ENCODE measurements at regions of chr2 and their contacts with region 1.

Region 1: GRCh38 chr2:135004005-135004746 is 43.1 kb downstream of the MAP3K19 start:
- DNase-seq: peak; percentile 75
- ATAC-seq: peak; percentile 96
- H3K4me3 Mint-ChIP-seq: no peak overlapping the region
- H3K27ac Mint-ChIP-seq: no peak overlapping the region
- H3K4me1 Mint-ChIP-seq: peaks cover 4% of the 10 kb centered on the region
- H3K27me3 Mint-ChIP-seq: peaks cover 8% of the 10 kb centered on the region

Region 2: DNA sequence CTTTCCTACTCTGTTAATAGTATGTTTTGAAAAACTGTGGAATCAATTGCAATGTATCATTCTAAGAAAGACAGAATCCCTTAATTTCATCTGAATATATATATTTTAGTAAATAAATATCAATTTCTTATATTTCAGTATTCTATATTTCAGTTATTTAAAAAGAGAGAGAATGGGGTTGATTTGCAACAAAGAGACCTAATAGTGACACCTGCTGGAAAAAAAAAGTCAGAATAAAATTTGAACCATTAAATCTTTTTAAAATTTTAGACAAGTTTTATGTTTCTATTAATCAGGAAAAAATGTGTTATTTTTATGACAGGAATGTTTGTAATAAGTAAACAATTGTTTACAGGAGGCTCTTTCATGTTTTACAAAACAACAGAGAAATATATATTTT is 106.2 kb before region 1 on chr2:
- CTCF ChIA-PET with region 1: no interaction called
- POLR2A ChIA-PET with region 1: no interaction called
- DNase-seq: no peak
- ATAC-seq: no peak
- H3K4me3 Mint-ChIP-seq: no peak overlapping the region
- H3K27ac Mint-ChIP-seq: no peak overlapping the region
- H3K4me1 Mint-ChIP-seq: no peaks in the 10 kb centered on the region
- H3K27me3 Mint-ChIP-seq: peaks cover 6% of the 10 kb centered on the region

Region 3: GRCh38 chr2:134988994-134989605 is 15.1 kb before region 1 on chr2:
- CTCF ChIA-PET with region 1: interaction called, 20 read pairs
- POLR2A ChIA-PET with region 1: no interaction called
- DNase-seq: no peak
- ATAC-seq: no peak
- H3K4me3 Mint-ChIP-seq: no peak overlapping the region
- H3K27ac Mint-ChIP-seq: no peak overlapping the region
- H3K4me1 Mint-ChIP-seq: peaks cover under 1% of the 10 kb centered on the region
- H3K27me3 Mint-ChIP-seq: peaks cover 10% of the 10 kb centered on the region

Region 4: DNA sequence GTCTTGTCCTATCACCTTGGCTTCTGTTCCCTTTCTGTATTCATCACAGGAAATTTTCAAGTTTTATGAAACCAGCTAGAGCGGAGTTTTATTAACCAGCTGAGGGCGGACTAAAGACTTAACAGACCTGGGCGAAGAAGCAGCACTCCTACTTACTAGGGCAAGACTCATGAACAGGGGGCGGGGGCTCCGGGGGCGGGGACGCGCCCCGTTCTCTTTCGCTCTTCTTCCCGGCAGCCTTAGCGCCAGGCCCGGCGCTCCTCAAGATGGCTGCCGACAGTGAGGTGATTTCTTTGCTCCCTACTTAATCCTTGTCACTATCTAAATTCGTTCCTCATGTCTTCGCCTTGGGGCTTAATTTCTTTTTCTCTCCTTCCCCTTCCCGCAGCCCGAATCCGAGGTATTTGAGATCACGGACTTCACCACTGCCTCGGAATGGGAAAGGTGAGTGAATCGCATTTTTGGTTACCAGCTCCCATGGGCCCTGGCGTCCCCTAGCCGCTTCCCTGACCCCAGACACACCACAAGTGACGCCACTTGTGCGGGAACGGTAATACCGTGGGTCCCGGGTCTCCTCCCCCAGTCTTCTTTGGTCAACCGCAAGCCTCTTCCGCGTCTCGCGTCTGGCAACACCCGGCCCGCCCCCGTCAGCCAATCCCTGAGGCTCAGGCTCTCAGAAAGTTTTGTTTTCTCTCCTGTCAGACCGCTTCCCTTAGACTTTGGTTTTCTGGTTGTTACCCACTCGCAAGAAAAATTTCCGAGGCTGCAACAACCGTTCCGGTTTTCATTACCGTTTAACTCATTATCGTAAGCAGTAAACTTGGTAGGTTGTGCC is 48.1 kb after region 1 on chr2 and contains the start of gene RAB3GAP1:
- CTCF ChIA-PET with region 1: interaction called, 15 read pairs
- POLR2A ChIA-PET with region 1: no interaction called
- DNase-seq: peak; percentile 95
- ATAC-seq: peak; percentile 86
- H3K4me3 Mint-ChIP-seq: peak within 1 kb of the TSS; percentile 94
- H3K27ac Mint-ChIP-seq: peak within 1 kb of the TSS; percentile 100
- H3K4me1 Mint-ChIP-seq: peaks cover 48% of the 10 kb centered on the region
- H3K27me3 Mint-ChIP-seq: no peaks in the 10 kb centered on the region
- total RNA-seq, gene RAB3GAP1: 10.3 to 10.7 TPM

Region 5: DNA sequence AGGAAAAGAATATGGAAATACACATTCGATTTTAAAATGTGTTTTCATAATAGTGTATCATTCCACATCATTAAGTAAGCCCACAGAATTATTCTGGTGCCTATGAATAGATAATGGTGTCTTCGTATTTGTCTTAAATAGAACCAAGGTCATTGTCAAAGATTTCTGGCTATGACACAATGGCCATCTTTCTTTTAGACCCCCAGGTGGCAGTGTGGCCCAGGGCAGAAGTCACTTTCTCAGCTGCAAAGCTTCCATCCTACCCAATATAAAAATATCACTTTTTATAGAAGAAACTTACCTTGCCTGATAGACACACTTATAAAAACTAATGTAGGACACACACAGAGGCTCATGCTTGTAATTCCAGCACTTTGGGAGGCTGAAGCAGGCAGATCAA is 469.4 kb after region 1 on chr2:
- CTCF ChIA-PET with region 1: interaction called, 15 read pairs
- POLR2A ChIA-PET with region 1: no interaction called
- DNase-seq: peak; percentile 46
- ATAC-seq: no peak
- H3K4me3 Mint-ChIP-seq: no peak overlapping the region
- H3K27ac Mint-ChIP-seq: no peak overlapping the region
- H3K4me1 Mint-ChIP-seq: no peaks in the 10 kb centered on the region
- H3K27me3 Mint-ChIP-seq: no peaks in the 10 kb centered on the region

Region 6: DNA sequence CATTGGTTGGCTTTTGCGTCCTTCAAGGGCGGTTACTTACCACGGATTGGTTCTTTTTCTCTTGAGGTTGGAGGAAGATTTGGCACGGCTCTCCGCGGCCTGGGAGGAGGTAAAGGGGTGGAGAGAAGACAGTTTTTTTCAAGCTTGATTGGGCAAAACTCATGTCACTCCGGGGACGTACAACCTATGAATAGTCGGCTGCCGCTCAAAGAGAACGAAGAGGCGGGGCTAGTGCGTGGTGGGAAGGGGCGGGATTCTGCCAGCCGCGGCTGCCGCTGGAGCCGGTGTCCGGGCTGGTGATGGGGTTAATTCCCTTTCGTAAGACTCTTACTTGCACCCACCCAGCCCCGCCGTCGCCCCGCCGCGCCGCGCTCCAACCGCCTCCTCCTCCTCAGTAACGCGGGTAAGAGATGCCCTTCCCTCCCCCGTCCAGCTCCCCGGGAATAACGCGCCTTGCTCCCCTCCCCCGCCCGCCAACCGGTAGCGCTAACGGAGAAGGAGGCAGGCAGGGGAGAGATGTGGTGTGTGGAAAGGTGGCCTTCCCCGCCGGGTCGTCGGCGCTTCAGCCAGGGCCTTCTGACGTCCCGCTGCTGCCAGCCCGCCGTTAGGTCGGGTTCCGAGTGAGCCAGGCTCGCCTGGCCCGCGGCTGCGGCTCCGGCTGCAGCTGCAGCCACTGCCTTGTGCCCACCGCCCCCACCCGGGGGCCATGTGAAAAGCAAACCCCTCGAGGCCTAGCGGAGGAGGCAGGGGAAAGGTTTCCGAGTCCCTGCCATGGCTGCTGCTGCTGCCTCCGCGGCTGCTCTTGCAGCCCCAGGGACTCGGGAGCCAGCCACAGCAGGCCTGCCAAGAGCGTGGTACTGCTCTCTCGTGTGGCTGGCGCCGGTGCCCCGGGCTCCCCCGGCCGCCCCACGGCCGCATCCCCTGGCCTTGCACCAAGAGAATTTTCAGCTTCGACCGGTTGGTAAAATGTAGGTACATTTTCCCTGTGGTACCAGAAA is 527.4 kb after region 1 on chr2 and contains the start of gene R3HDM1:
- CTCF ChIA-PET with region 1: interaction called, 15 read pairs
- POLR2A ChIA-PET with region 1: no interaction called
- DNase-seq: peak; percentile 98
- ATAC-seq: peak; percentile 87
- H3K4me3 Mint-ChIP-seq: no peak within 1 kb of the TSS
- H3K27ac Mint-ChIP-seq: no peak within 1 kb of the TSS
- H3K4me1 Mint-ChIP-seq: peaks cover 37% of the 10 kb centered on the region
- H3K27me3 Mint-ChIP-seq: no peaks in the 10 kb centered on the region
- total RNA-seq, gene R3HDM1: 51.9 to 53.9 TPM

Region 7: DNA sequence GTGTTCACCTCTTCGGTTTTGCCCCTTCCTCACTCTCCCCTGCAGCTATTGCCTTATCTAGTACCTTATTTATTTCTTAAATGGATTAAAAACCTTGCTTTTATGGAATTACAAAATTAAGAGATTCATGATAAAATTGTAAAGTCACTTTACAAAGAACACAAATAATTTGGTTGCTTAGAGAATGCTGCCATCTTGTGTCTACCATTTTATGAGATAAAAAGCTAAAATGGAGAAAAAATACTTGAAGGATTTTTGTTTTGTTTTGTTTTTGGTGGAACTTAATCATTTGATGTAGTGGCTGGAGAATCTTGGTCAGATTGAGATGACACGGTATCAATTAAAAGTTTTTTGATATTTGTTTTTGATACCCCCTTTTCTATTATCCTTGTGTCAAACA is 596.7 kb after region 1 on chr2:
- CTCF ChIA-PET with region 1: interaction called, 18 read pairs
- POLR2A ChIA-PET with region 1: no interaction called
- DNase-seq: no peak
- ATAC-seq: no peak
- H3K4me3 Mint-ChIP-seq: no peak overlapping the region
- H3K27ac Mint-ChIP-seq: no peak overlapping the region
- H3K4me1 Mint-ChIP-seq: no peaks in the 10 kb centered on the region
- H3K27me3 Mint-ChIP-seq: no peaks in the 10 kb centered on the region